ENCODE measurements at regions of chr14 and their contacts with region 1.

Region 1: DNA sequence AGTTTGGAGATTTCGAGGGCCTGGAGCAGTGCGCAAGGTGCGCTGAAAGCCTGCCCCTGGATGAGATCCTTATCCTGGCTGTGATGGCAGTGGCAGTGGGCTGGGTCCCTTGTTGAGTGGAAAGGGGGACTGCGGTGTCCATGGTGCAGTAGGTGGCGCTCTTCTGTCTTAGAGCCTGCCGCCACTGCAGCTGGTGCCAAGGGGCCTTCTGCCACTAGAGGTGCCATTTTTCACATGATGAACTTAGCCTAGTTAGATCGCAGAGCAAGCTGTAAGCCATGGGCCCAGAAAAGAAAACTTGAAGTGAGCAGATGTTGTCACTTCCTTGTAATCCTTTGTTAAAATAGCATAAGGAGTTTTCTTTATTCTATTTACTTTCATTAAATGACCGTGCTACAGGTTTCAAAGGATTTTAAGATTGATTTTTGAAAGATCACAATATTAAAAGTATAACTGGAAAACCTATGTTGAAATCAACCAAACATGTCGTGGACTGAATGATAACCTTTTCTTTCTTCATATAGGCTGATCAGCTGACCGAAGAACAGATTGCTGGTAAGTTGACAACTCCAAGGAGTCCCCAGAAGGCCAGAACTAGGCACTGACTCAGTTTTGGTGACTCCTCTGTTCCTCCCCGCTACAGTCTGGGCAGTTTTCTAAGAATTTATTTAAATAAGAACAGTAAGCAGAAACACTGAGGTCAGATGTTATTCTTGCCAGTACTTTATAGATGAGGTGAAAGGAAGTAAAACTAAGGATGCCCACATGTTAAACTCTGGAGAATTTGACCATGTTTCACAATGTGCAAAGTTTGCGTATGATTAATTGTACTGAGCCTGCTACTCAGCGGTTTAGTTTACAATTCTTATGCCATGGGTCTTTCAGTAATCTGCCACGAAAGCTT is 3.0 kb downstream of the CALM1 start:
- DNase-seq: peak; percentile 68 to 96
- H3K4me3 ChIP-seq: peak overlapping the region; percentile 94 to 98
- H3K27ac ChIP-seq: peak overlapping the region; percentile 90 to 97
- H3K4me1 ChIP-seq: peaks cover 0 to 36% of the 10 kb centered on the region in 2 donors
- H3K27me3 ChIP-seq: no peaks in the 10 kb centered on the region
- CTCF ChIP-seq: peak; percentile 97 to 99 (median 98)

Region 2: DNA sequence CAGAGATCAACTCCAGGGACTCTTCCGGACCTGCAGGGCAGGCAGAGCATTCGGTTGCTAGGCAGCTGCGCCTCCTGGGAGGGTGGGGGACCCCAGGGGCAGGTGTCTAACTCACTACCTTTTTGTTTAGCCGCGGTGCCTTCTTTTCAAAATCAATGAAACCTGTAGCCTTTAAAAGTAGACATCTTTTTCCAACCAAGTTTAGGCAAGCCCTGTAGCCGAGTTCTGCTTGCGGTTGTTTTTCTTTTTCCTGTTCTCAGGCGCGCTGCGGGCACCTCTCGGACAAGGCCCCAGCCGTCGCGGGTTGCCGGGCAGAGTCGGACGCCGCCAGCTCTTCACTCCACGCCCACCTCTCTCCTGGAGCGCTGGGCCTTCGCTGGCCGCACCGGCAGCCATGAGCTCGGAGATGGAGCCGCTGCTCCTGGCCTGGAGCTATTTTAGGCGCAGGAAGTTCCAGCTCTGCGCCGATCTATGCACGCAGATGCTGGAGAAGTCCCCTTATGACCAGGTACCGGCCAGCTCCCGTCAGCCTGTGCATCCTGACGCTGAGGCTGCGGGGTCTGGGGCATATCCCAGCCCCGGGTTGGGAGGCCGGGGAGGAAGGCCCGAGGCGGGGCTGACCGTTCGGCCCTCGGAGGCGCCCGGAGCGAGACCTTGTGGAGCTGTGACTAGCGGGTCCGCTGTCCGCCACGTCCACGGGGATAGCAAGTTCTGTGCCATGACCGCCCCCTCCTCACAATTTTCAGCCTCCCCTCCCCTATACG is 1575.3 kb before region 1 on chr14 and contains the start of gene TTC8:
- intact Hi-C with region 1: loop called (anchors 10 kb)
- DNase-seq: peak; percentile 42 to 91
- H3K4me3 ChIP-seq: peak within 1 kb of the TSS; percentile 71 to 78
- H3K27ac ChIP-seq: peak within 1 kb of the TSS; percentile 72
- H3K4me1 ChIP-seq: peaks cover 0 to 1% of the 10 kb centered on the region in 2 donors
- H3K27me3 ChIP-seq: no peaks in the 10 kb centered on the region
- CTCF ChIP-seq: no peak
- total RNA-seq, gene TTC8: 24.4 TPM

Region 3: GRCh38 chr14:90331497-90332435 is 68.0 kb before region 1 on chr14 and contains the start of gene NRDE2:
- intact Hi-C with region 1: loop called (anchors 5 kb)
- DNase-seq: peak; percentile 91 to 99
- H3K4me3 ChIP-seq: peak within 1 kb of the TSS; percentile 70 to 81
- H3K27ac ChIP-seq: peak within 1 kb of the TSS; percentile 82 to 83
- H3K4me1 ChIP-seq: peaks cover 0 to 3% of the 10 kb centered on the region in 2 donors
- H3K27me3 ChIP-seq: no peaks in the 10 kb centered on the region
- CTCF ChIP-seq: no peak
- total RNA-seq, gene NRDE2: 9.2 TPM

Region 4: GRCh38 chr14:90361865-90362557 is 37.8 kb before region 1 on chr14:
- intact Hi-C with region 1: no loop called
- DNase-seq: no peak
- H3K4me3 ChIP-seq: no peak overlapping the region
- H3K27ac ChIP-seq: no peak overlapping the region
- H3K4me1 ChIP-seq: no peaks in the 10 kb centered on the region
- H3K27me3 ChIP-seq: no peaks in the 10 kb centered on the region
- CTCF ChIP-seq: no peak

Region 5: GRCh38 chr14:90522571-90523191 is 122.9 kb after region 1 on chr14:
- intact Hi-C with region 1: loop called (anchors 2 kb)
- DNase-seq: peak in 1 of 2 donors; percentile 80
- H3K4me3 ChIP-seq: peak overlapping the region in 1 of 2 donors; percentile 1
- H3K27ac ChIP-seq: peak overlapping the region; percentile 71 to 83
- H3K4me1 ChIP-seq: peaks cover 16 to 39% of the 10 kb centered on the region in 2 donors
- H3K27me3 ChIP-seq: no peaks in the 10 kb centered on the region
- CTCF ChIP-seq: no peak

Region 6: GRCh38 chr14:90599748-90600507 is 200.1 kb after region 1 on chr14:
- intact Hi-C with region 1: loop called (anchors 2 kb)
- DNase-seq: no peak
- H3K4me3 ChIP-seq: no peak overlapping the region
- H3K27ac ChIP-seq: no peak overlapping the region
- H3K4me1 ChIP-seq: peaks cover 0 to 6% of the 10 kb centered on the region in 2 donors
- H3K27me3 ChIP-seq: no peaks in the 10 kb centered on the region
- CTCF ChIP-seq: peak; percentile 6 to 49 (median 34)

Region 7: GRCh38 chr14:90697577-90698206 is 297.9 kb after region 1 on chr14:
- intact Hi-C with region 1: loop called (anchors 1 kb)
- DNase-seq: peak; percentile 50 to 92
- H3K4me3 ChIP-seq: peak overlapping the region in 1 of 2 donors; percentile 28
- H3K27ac ChIP-seq: peak overlapping the region; percentile 76 to 86
- H3K4me1 ChIP-seq: peaks cover 12 to 25% of the 10 kb centered on the region in 2 donors
- H3K27me3 ChIP-seq: no peaks in the 10 kb centered on the region
- CTCF ChIP-seq: peak; percentile 88 to 97 (median 95)

Region 8: GRCh38 chr14:91149479-91149921 is 749.7 kb after region 1 on chr14:
- intact Hi-C with region 1: loop called (anchors 5 kb)
- DNase-seq: peak in 1 of 2 donors; percentile 82
- H3K4me3 ChIP-seq: no peak overlapping the region
- H3K27ac ChIP-seq: peak overlapping the region in 1 of 2 donors; percentile 69
- H3K4me1 ChIP-seq: peaks cover 0 to 7% of the 10 kb centered on the region in 2 donors
- H3K27me3 ChIP-seq: no peaks in the 10 kb centered on the region
- CTCF ChIP-seq: no peak

Measured in ascending aorta (tissue), 2 donors.